ENCODE measurements at regions of chr1 and their contacts with region 1.

Region 1: DNA sequence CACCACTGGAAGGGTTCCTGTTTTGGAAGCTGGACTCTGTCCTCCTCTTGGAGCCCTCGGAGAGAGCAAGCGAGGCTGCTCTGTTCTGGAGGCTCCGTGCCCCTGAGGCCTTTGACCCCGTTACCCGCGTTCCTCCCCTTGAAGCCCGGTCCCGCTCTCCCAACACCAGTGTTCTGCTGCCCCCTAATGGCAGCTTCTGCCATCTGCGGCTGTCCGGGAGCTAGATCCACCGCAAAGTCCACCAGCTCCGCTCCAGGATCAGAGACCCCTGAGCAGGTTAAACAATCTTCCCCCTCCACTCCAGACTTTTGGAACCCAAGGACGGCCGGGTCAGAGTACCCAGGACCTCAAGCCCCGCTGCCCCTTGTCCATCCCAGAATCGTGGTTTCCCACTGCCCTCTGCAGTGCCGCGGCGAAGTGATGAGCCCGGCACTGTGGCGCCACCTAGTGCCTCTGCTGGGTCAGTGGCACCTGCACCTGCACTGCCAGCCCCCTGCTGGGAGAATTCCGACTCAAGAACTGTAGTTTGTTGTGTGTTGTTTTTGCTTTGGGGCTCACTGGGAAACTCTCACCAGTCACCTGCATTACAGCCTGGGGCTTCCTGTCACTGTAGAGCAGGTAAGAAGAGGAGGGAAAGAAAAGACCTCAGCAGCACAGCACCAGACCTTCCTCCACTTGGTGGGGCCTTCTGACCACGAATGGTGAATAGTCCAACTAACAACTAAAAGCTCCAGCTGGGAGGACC is 63.5 kb upstream of the NFASC start:
- DNase-seq: peak; percentile 75
- H3K4me3 Mint-ChIP-seq: peak overlapping the region; percentile 82
- H3K27ac Mint-ChIP-seq: peak overlapping the region; percentile 71
- H3K4me1 Mint-ChIP-seq: peaks cover 5% of the 10 kb centered on the region
- H3K27me3 Mint-ChIP-seq: peaks cover 11% of the 10 kb centered on the region

Region 2: DNA sequence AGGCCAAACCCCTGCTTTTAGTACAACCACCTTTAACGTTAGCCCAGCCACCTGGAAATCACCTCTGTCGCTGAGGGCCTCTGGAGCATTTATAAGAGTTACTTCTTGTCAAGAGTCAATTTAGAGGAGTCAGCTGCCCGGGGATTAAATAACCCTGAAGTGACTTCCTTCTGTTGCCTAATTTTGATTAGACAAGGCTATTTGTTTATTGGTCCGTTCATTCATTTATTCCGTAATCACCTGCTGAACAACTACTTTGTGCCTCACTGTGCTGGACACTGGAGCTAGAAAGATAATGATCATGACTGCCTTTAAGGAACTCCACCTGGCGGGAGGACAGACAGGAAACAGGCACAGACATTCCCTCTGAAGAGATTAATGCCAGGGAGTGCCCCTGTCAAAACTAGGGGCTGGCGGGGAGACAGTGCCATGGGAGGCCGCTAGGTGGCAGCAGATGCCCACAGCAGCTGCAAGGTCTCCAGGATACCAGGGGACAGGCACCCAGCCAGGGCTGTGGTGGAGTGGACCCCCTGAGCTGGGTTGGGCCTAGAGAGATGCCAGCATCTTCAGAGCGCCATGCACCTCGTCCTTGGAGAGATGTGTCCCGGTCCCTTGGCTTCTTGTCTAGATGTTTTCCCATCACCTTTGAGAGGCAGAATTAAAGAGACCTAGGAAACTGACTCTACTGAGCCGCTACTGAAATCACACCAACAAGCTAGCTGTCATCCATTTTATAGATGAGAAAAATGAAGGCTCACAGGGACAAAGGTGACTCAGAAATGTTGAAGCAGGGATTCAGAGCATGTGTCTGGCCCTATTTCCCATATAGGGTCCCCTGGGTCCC is 644.7 kb before region 1 on chr1:
- intact Hi-C with region 1: loop called (anchors 1 kb)
- DNase-seq: peak; percentile 57
- H3K4me3 Mint-ChIP-seq: no peak overlapping the region
- H3K27ac Mint-ChIP-seq: no peak overlapping the region
- H3K4me1 Mint-ChIP-seq: no peaks in the 10 kb centered on the region
- H3K27me3 Mint-ChIP-seq: peaks cover 4% of the 10 kb centered on the region

Region 3: DNA sequence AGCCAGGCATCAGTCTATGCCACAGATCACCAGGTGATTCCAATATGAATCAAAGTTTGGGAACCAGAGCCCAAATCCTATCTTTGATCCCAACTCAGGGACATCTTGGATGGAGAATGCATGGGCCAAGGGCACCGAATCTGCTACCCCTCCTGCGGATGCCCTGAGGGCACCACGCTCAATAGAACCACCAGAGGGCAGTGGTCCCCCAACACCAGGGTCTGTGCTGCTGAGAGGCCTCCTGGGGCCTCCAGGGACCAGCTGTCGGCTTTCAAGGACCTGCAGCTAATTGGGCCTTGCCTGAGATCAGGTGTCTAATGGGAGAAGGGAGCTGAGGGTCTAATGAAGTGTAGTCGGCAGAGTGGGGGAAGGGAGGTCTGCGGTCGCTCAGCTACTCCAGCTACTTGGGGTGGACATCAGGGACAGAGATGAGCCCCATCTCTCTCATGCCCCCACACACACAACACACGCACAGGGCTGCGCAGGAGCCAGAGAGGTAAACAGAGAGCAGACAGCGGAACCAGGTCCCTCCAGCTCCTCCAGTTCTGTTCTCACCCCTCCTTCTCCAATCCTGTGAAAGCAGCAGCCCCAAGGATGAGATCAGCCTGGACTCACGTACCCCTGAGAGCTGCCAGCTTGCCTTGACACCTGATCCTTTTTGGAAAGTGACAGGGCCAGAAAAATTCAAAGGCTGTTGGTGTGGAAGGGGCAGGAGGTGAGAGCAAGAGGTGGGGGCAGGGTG is 360.6 kb before region 1 on chr1:
- intact Hi-C with region 1: loop called (anchors 1 kb)
- DNase-seq: peak; percentile 66
- H3K4me3 Mint-ChIP-seq: no peak overlapping the region
- H3K27ac Mint-ChIP-seq: peak overlapping the region; percentile 49
- H3K4me1 Mint-ChIP-seq: peaks cover 48% of the 10 kb centered on the region
- H3K27me3 Mint-ChIP-seq: no peaks in the 10 kb centered on the region

Region 4: GRCh38 chr1:204565617-204566582 is 241.2 kb before region 1 on chr1:
- intact Hi-C with region 1: loop called (anchors 1 kb)
- DNase-seq: peak; percentile 56
- H3K4me3 Mint-ChIP-seq: no peak overlapping the region
- H3K27ac Mint-ChIP-seq: peak overlapping the region; percentile 68
- H3K4me1 Mint-ChIP-seq: peaks cover 67% of the 10 kb centered on the region
- H3K27me3 Mint-ChIP-seq: no peaks in the 10 kb centered on the region

Region 5: DNA sequence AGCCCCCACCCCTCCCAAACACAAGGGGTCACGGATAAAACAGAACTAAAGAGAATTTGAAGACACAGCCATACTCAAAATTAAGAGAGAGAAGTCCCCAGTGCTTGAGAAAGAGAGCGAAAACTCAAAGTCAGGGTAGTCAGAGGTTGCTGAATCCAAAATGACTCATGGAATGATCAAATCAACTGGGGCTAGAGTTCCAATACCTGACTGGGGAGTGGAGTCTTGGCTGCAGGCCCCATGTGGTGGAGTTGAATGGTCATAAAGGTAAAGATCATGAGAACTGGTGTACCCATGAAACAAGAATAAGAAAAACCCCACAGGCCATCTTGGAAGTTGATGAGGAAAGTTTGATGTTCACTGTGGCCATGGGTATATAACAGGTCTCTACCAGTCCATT is 37.1 kb before region 1 on chr1:
- intact Hi-C with region 1: no loop called
- DNase-seq: no peak
- H3K4me3 Mint-ChIP-seq: no peak overlapping the region
- H3K27ac Mint-ChIP-seq: no peak overlapping the region
- H3K4me1 Mint-ChIP-seq: no peaks in the 10 kb centered on the region
- H3K27me3 Mint-ChIP-seq: peaks cover 60% of the 10 kb centered on the region

Region 6: DNA sequence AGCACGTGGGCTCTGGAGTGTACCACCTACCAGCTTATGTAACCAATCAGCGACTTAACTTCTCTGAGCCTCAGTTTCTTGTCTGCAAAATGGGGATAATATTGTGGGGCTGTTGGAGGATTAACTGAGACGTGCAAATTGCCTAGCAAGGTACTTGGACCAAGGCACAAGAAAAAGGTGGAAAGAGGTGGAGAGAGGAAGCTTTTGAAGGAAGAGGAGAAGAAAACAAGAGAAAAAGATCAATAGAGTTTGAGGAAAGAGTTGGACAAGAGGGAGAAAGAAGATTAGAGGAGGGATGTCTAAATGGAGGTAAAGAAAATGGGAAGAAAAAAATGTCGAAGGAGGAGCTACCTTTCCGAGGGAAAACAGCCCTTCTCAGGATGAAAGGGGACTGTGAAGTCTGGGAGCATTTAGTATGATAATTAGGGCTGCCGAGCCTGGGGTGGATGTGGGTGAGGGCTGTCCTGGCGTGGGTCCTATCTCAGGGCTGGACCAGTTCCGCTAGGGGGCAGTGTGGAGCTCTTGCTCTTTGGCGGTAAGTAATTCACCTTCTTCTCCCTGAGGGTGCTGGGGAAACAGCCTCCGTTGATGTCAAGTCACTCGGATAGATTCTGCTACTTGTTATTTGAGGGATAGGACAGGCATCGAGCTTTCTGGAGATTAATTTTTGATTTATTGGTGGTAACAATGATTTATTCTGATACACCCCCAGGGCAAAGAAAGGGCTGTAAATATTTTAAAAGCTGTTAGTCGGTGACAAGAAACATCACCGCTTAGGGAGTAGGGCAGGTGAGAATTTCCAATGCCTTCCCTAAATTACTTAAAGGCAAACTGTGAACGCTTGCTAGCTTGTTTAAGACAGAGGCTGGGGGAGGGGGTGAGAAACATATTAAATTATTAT is 15.4 kb before region 1 on chr1:
- intact Hi-C with region 1: loop called (anchors 1 kb)
- DNase-seq: peak; percentile 66
- H3K4me3 Mint-ChIP-seq: no peak overlapping the region
- H3K27ac Mint-ChIP-seq: no peak overlapping the region
- H3K4me1 Mint-ChIP-seq: no peaks in the 10 kb centered on the region
- H3K27me3 Mint-ChIP-seq: peaks cover 30% of the 10 kb centered on the region